ENCODE measurements at regions of chr1 and their contacts with region 1.

Region 1: GRCh38 chr1:87794788-87795614 is 466.3 kb downstream of the LMO4 start:
- DNase-seq: peak; percentile 55
- H3K4me3 Mint-ChIP-seq: peak overlapping the region; percentile 38
- H3K27ac Mint-ChIP-seq: peak overlapping the region; percentile 85
- H3K4me1 Mint-ChIP-seq: peaks cover 88% of the 10 kb centered on the region
- H3K27me3 Mint-ChIP-seq: no peaks in the 10 kb centered on the region
- CTCF ChIP-seq: no peak

Region 2: DNA sequence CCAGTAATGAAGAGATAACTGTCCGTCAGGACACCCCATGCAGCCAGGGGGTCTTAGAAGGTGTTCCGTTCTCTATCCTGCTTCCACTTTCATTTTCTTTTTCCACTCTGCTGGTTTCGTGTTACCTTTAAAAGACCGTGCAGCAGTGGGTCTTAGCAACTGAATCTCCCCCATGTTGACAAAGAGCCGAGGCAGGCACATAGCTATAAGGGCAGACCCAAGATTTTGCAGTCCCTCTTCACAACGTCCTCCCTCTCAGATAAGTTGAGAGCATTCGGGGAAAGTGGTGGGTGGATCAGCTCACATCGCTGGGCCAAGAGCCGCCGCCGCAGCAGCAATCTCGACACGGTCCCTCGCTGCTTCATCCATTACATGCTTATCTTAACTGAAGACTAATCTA is 110.8 kb before region 1 on chr1:
- CTCF ChIA-PET with region 1: no interaction called
- intact Hi-C with region 1: loop called (anchors 5 kb)
- DNase-seq: no peak
- H3K4me3 Mint-ChIP-seq: peak overlapping the region; percentile 77
- H3K27ac Mint-ChIP-seq: peak overlapping the region; percentile 77
- H3K4me1 Mint-ChIP-seq: peaks cover 58% of the 10 kb centered on the region
- H3K27me3 Mint-ChIP-seq: no peaks in the 10 kb centered on the region
- CTCF ChIP-seq: no peak

Region 3: GRCh38 chr1:87869567-87869966 is 74.6 kb after region 1 on chr1:
- CTCF ChIA-PET with region 1: no interaction called
- intact Hi-C with region 1: loop called (anchors 5 kb)
- DNase-seq: peak; percentile 8
- H3K4me3 Mint-ChIP-seq: peak overlapping the region; percentile 35
- H3K27ac Mint-ChIP-seq: peak overlapping the region; percentile 97
- H3K4me1 Mint-ChIP-seq: peaks cover 36% of the 10 kb centered on the region
- H3K27me3 Mint-ChIP-seq: no peaks in the 10 kb centered on the region
- CTCF ChIP-seq: no peak

Region 4: GRCh38 chr1:87953732-87954344 is 158.8 kb after region 1 on chr1:
- CTCF ChIA-PET with region 1: interaction called, 21 read pairs
- intact Hi-C with region 1: loop called (anchors 1 kb)
- DNase-seq: peak; percentile 75
- H3K4me3 Mint-ChIP-seq: no peak overlapping the region
- H3K27ac Mint-ChIP-seq: peak overlapping the region; percentile 50
- H3K4me1 Mint-ChIP-seq: peaks cover 33% of the 10 kb centered on the region
- H3K27me3 Mint-ChIP-seq: no peaks in the 10 kb centered on the region
- CTCF ChIP-seq: peak; percentile 66

Region 5: GRCh38 chr1:88180449-88181108 is 385.6 kb after region 1 on chr1:
- CTCF ChIA-PET with region 1: no interaction called
- intact Hi-C with region 1: loop called (anchors 5 kb)
- DNase-seq: peak; percentile 85
- H3K4me3 Mint-ChIP-seq: no peak overlapping the region
- H3K27ac Mint-ChIP-seq: peak overlapping the region; percentile 12
- H3K4me1 Mint-ChIP-seq: peaks cover 38% of the 10 kb centered on the region
- H3K27me3 Mint-ChIP-seq: no peaks in the 10 kb centered on the region
- CTCF ChIP-seq: peak; percentile 91

Measured in Calu3 (cell line).